Heart right ventricle (tissue), 16 donors: ENCODE measurements at regions of chr18 and their contacts with region 1.

Region 1: DNA sequence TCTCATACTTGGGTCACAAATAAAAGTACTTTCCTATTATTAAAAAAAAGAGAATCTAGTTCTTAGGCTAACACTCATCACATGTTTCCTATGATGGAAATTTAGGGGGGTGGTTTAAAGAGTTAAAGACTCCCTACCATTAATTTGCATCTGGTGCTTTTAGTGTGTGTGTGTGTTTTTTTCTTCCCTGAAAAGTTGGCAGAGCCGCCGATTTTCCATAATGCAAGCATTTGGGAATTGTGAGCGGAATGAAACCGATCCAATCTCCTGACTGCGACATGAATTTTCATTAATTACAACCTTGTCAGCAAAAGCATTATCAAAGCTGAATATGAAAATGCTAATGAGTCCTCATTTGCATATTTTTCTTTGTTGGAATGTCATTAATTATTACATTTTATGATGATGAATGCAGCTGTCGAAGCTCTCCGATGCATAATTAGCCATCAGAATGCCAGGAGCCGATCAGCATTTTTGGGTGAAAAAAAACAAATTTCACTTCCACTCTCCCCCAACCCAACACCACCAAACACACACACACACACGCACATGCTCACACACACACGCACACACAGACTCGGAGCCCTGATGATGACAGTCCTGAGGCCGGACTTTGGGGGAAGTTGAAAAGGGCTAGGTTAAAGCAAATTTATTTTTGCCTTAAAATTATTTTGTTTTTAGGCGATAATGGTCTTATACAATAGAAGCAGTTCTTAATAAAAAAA is 165.4 kb downstream of the TCF4 start:
- DNase-seq: peak; percentile 27 to 82
- ATAC-seq: peak in 6 of 8 donors; percentile 56 to 75 (median 68)
- H3K4me3 ChIP-seq: peak overlapping the region in 9 of 10 donors; percentile 15 to 53 (median 46)
- H3K27ac ChIP-seq: peak overlapping the region; percentile 73 to 92 (median 80)
- H3K4me1 ChIP-seq: peaks cover 0 to 46% (median 25%) of the 10 kb centered on the region in 9 donors
- H3K27me3 ChIP-seq: no peaks in the 10 kb centered on the region
- CTCF ChIP-seq: no peak

Region 2: DNA sequence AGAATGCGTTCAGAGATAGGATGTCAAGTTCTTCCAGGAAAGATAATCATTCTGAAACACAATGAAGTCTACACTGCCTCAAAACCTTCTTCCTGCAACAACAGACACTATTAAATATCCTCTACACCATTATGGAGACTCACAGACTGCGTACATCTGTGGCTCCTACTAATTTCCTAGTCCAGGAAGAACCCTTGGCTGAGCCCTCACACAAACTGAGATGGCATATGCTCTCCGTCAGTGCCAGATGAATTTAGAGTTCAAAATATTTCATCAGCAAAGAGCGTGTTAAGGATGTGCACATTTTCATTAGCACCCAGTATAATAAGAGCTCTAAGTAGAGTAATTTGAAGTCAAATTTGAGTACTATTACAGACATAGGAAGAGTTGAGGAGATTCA is 48.2 kb after region 1 on chr18:
- intact Hi-C with region 1: loop called in 1 of 10 experiments (anchors 5 kb)
- DNase-seq: no peak
- ATAC-seq: no peak
- H3K4me3 ChIP-seq: no peak overlapping the region
- H3K27ac ChIP-seq: no peak overlapping the region
- H3K4me1 ChIP-seq: peaks cover 0 to 59% (median 9%) of the 10 kb centered on the region in 9 donors
- H3K27me3 ChIP-seq: no peaks in the 10 kb centered on the region
- CTCF ChIP-seq: no peak

Region 3: GRCh38 chr18:55489034-55489986 is 66.7 kb after region 1 on chr18:
- intact Hi-C with region 1: no loop called
- DNase-seq: no peak
- ATAC-seq: peak in 2 of 8 donors; percentile 15 to 71
- H3K4me3 ChIP-seq: no peak overlapping the region
- H3K27ac ChIP-seq: peak overlapping the region in 2 of 10 donors; percentile 26 to 38
- H3K4me1 ChIP-seq: peaks cover 4 to 58% (median 39%) of the 10 kb centered on the region in 9 donors
- H3K27me3 ChIP-seq: no peaks in the 10 kb centered on the region
- CTCF ChIP-seq: no peak

Region 4: GRCh38 chr18:55731594-55732042 is 309.0 kb after region 1 on chr18:
- intact Hi-C with region 1: loop called in 1 of 10 experiments (anchors 5 kb)
- DNase-seq: no peak
- ATAC-seq: peak in 5 of 8 donors; percentile 31 to 61 (median 46)
- H3K4me3 ChIP-seq: no peak overlapping the region
- H3K27ac ChIP-seq: peak overlapping the region; percentile 16 to 84 (median 56)
- H3K4me1 ChIP-seq: peaks cover 0 to 21% (median 17%) of the 10 kb centered on the region in 9 donors
- H3K27me3 ChIP-seq: no peaks in the 10 kb centered on the region
- CTCF ChIP-seq: no peak